ENCODE measurements at regions of chr15 and their contacts with region 1.

Region 1: DNA sequence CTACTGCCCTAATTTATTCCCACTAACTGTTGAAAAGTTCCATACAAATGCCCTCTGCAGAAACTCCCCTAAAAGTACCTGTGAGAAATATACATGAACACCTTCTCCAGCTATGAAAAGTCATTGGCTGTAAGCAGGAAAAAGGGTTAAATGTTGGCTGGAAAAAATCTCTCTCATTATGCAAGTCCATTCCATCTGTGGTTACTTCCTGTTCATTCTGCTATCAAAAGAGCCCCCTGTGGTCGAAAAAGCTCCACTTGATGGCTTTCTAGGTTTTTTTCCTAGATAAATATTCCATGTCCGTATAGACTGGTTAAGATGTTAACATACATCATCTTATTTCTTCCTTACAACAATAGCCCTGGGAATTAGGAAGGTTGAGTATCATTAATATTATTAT is 56.2 kb upstream of the AKAP13 start:
- DNase-seq: no peak
- ATAC-seq: no peak
- H3K4me3 ChIP-seq: no peak overlapping the region
- H3K27ac ChIP-seq: no peak overlapping the region
- H3K4me1 ChIP-seq: peaks cover 25% of the 10 kb centered on the region
- H3K27me3 ChIP-seq: no peaks in the 10 kb centered on the region
- CTCF ChIP-seq: no peak
- EP300 ChIP-seq: no peak
- POLR2A ChIP-seq: no peak
- RAD21 ChIP-seq: no peak

Region 2: DNA sequence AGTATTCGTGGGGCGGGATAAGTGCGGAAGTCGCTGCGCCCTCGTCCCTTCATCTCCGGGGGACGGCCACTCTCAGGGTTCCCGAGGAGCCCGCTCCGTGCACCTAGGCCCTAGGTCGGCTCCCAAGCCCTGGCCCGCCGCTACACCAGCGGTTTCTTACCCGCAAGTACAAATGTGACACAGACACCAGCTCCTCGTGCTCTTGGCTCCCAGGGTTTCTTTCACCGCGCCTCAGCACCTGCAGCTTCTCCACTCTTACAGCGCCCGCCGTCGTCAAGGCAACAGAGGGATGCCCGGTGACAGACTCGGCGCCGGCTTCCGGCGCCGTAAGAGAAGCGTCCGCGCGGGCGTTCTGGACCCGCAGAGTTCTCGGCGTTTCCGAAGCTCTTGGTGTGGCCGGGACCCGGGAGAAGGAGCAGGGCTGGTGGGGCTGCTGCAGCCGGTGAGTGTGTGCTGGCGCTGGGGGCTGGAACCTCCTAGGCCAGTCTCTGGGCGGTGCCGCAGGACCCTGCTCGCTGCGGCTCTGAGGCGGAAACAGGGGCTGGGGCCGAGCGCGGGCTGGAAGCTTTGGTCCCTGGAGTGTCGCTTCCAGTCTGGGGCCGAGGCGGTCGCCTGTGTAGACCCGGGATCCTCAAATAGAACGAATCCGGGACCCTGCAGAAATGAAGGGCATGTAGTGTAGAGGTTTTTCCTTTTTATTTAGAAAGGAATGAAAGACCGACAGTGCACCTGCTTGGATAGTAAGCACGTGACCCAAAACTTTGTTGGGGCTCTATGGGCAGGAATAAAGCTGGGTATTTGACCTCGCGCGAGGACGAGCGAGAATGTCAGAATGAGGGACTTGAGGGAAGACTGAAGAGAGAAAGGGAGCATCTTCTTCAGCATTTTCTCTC is 1244.1 kb before region 1 on chr15:
- CTCF ChIA-PET with region 1: no interaction called
- POLR2A ChIA-PET with region 1: no interaction called
- RAD21 ChIA-PET with region 1: no interaction called
- SMC1A ChIA-PET with region 1: no interaction called
- in situ Hi-C with region 1: no loop called
- intact Hi-C with region 1: no loop called
- DNase-seq: no peak
- ATAC-seq: peak; percentile 96
- H3K4me3 ChIP-seq: peak overlapping the region; percentile 79
- H3K27ac ChIP-seq: no peak overlapping the region
- H3K4me1 ChIP-seq: no peaks in the 10 kb centered on the region
- H3K27me3 ChIP-seq: no peaks in the 10 kb centered on the region
- CTCF ChIP-seq: no peak
- EP300 ChIP-seq: no peak
- POLR2A ChIP-seq: 0 out of 2 replicates have a peak, but pooled peaks have one; percentile 29
- RAD21 ChIP-seq: no peak

Region 3: DNA sequence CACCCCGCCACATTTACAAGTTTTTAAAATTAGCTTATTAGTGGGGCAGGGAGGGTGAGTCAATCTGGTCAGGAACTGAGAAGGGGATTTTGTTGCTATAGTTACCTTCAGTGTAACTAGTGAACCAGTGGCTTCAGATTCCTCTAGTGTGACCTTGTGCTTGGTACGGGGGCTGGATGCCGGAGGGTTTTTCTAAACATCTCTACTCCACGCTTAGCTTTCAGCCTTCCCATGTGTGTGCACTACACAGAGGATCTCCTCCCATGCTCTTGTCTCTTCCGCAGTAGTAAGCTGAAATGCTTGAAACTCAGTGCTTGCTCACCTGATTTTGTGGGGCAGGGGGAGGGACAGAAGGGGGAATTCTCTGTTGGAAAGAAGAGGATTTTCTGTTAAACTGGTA is 11.7 kb before region 1 on chr15:
- CTCF ChIA-PET with region 1: interaction called, 115 read pairs
- POLR2A ChIA-PET with region 1: interaction called, 13 read pairs
- RAD21 ChIA-PET with region 1: interaction called, 49 read pairs
- SMC1A ChIA-PET with region 1: interaction called, 177 read pairs
- in situ Hi-C with region 1: no loop called
- intact Hi-C with region 1: no loop called
- DNase-seq: peak; percentile 77
- ATAC-seq: peak; percentile 98
- H3K4me3 ChIP-seq: peak overlapping the region; percentile 39
- H3K27ac ChIP-seq: peak overlapping the region; percentile 84
- H3K4me1 ChIP-seq: peaks cover 36% of the 10 kb centered on the region
- H3K27me3 ChIP-seq: no peaks in the 10 kb centered on the region
- CTCF ChIP-seq: no peak
- EP300 ChIP-seq: peak in 1 of 2 experiments; percentile 41; a peak in 1 of 4 replicates
- POLR2A ChIP-seq: peak; percentile 38; the same call in 1 of the 2 replicates
- RAD21 ChIP-seq: no peak

Region 4: GRCh38 chr15:85394552-85395333 is 70.5 kb after region 1 on chr15:
- CTCF ChIA-PET with region 1: no interaction called
- POLR2A ChIA-PET with region 1: no interaction called
- RAD21 ChIA-PET with region 1: no interaction called
- SMC1A ChIA-PET with region 1: no interaction called
- in situ Hi-C with region 1: no loop called
- intact Hi-C with region 1: no loop called
- DNase-seq: no peak
- ATAC-seq: no peak
- H3K4me3 ChIP-seq: no peak overlapping the region
- H3K27ac ChIP-seq: no peak overlapping the region
- H3K4me1 ChIP-seq: no peaks in the 10 kb centered on the region
- H3K27me3 ChIP-seq: no peaks in the 10 kb centered on the region
- CTCF ChIP-seq: no peak
- EP300 ChIP-seq: no peak
- POLR2A ChIP-seq: no peak
- RAD21 ChIP-seq: no peak